ENCODE measurements at regions of chr2 and their contacts with region 1.

Region 1: GRCh38 chr2:172806493-172806892 is 70.8 kb downstream of the RAPGEF4 start:
- DNase-seq: no peak
- H3K4me3 ChIP-seq: no peak overlapping the region
- H3K27ac ChIP-seq: no peak overlapping the region
- H3K4me1 ChIP-seq: no peaks in the 10 kb centered on the region
- H3K27me3 ChIP-seq: no peaks in the 10 kb centered on the region
- CTCF ChIP-seq: peak; percentile 31 to 89 (median 76)
- POLR2A ChIP-seq: no peak

Region 2: DNA sequence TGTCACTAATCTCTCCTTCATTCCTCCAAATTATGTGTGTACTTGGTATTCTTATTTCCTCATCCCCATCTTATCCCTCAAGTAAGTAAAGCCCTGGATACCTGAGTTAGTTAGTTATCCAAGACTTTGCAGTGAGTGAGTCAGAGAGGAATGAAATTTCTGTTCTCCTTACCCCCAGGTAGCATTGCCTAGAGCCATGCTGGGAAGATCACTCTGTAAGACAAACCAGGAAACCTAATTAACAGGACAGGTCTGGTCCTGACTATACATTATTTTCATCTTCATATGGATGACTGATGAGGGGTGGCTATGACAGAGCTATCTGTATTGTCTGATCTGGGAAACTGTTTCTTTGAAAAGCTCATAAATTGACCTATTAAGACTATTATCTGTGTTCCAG is 434.1 kb before region 1 on chr2:
- intact Hi-C with region 1: no loop called
- DNase-seq: no peak
- H3K4me3 ChIP-seq: no peak overlapping the region
- H3K27ac ChIP-seq: no peak overlapping the region
- H3K4me1 ChIP-seq: no peaks in the 10 kb centered on the region
- H3K27me3 ChIP-seq: no peaks in the 10 kb centered on the region
- CTCF ChIP-seq: no peak
- POLR2A ChIP-seq: no peak

Region 3: GRCh38 chr2:172947461-172947860 is 141.0 kb after region 1 on chr2:
- intact Hi-C with region 1: no loop called
- DNase-seq: no peak
- H3K4me3 ChIP-seq: no peak overlapping the region
- H3K27ac ChIP-seq: no peak overlapping the region
- H3K4me1 ChIP-seq: no peaks in the 10 kb centered on the region
- H3K27me3 ChIP-seq: no peaks in the 10 kb centered on the region
- CTCF ChIP-seq: no peak
- POLR2A ChIP-seq: no peak

Region 4: GRCh38 chr2:173027181-173028128 is 221.0 kb after region 1 on chr2:
- intact Hi-C with region 1: loop called (anchors 10 kb)
- DNase-seq: peak; percentile 88 to 91
- H3K4me3 ChIP-seq: no peak overlapping the region
- H3K27ac ChIP-seq: peak overlapping the region in 2 of 3 donors; percentile 41
- H3K4me1 ChIP-seq: peaks cover 0 to 14% of the 10 kb centered on the region in 2 donors
- H3K27me3 ChIP-seq: no peaks in the 10 kb centered on the region
- CTCF ChIP-seq: peak; percentile 78 to 98 (median 93)
- POLR2A ChIP-seq: no peak

Measured in thyroid gland (tissue), 4 donors.